PC-3 (cell line): ENCODE measurements at regions of chr3 and their contacts with region 1.

Region 1: DNA sequence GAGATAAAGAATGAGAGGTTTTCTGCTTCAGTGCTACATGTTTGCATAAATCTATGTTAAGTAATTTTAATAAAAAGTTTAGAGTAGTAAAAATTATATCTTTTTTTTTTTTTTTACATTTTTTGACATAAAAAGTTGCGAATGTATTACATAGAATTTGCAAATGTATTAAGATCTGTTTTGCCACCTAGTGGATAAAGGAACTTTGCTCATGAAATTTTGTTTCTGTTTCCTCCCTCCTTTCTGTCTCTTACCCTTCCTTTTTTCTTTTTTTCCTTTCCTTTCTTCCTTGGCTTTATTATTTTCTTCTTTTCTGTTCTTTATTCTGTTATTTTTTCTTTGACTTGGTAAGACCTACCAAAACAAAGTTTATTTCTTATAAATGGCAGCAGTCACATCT is 58.5 kb upstream of the UTS2B start:
- DNase-seq: peak; percentile 42
- ATAC-seq: no peak
- H3K4me3 ChIP-seq: no peak overlapping the region
- H3K27ac ChIP-seq: no peak overlapping the region
- H3K4me1 ChIP-seq: no peaks in the 10 kb centered on the region; the same call in 1 of the 2 replicates
- H3K27me3 ChIP-seq: no peaks in the 10 kb centered on the region
- CTCF ChIP-seq: peak; percentile 45

Region 2: GRCh38 chr3:190617185-190617584 is 771.6 kb before region 1 on chr3:
- CTCF ChIA-PET with region 1: no interaction called
- POLR2A ChIA-PET with region 1: no interaction called
- intact Hi-C with region 1: no loop called
- DNase-seq: peak; percentile 7
- ATAC-seq: no peak
- H3K4me3 ChIP-seq: no peak overlapping the region
- H3K27ac ChIP-seq: no peak overlapping the region
- H3K4me1 ChIP-seq: no peaks in the 10 kb centered on the region
- H3K27me3 ChIP-seq: no peaks in the 10 kb centered on the region
- CTCF ChIP-seq: no peak

Region 3: GRCh38 chr3:191217301-191217700 is 171.5 kb before region 1 on chr3:
- CTCF ChIA-PET with region 1: no interaction called
- POLR2A ChIA-PET with region 1: no interaction called
- intact Hi-C with region 1: no loop called
- DNase-seq: no peak
- ATAC-seq: no peak
- H3K4me3 ChIP-seq: no peak overlapping the region
- H3K27ac ChIP-seq: no peak overlapping the region
- H3K4me1 ChIP-seq: no peaks in the 10 kb centered on the region
- H3K27me3 ChIP-seq: no peaks in the 10 kb centered on the region
- CTCF ChIP-seq: no peak

Region 4: DNA sequence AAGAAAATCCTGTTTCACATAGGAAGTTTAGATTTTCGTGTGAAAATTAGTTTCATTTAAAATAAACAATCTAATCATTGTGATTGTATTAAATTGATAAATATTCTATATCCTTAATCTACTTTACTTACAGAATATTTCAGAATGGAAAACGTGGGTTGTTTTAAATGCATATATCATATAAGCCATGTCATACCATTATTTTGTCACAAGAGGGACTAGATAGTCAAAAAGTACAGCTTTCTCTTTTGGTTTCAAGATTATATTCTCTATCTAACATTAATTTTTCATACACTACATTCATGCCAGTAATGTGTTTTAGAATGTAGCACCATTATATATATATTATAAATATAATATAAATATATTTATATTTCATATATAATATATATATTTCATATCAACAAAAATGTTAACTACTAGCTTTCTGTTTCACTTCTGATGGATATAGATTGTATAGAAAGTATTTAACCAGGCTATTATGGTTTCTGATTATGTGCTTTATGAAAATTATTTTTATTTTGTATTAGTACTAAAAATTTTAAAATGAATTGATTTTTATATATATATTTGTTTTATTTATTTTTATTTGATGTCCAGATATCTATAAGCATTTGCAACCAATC is 144.5 kb before region 1 on chr3:
- CTCF ChIA-PET with region 1: no interaction called
- POLR2A ChIA-PET with region 1: no interaction called
- intact Hi-C with region 1: loop called (anchors 1 kb)
- DNase-seq: peak; percentile 56
- ATAC-seq: peak; percentile 19; the same call in 1 of the 2 replicates
- H3K4me3 ChIP-seq: no peak overlapping the region
- H3K27ac ChIP-seq: no peak overlapping the region
- H3K4me1 ChIP-seq: peaks cover 44% of the 10 kb centered on the region
- H3K27me3 ChIP-seq: no peaks in the 10 kb centered on the region
- CTCF ChIP-seq: peak; percentile 65

Region 5: GRCh38 chr3:191356611-191357439 is 32.0 kb before region 1 on chr3:
- CTCF ChIA-PET with region 1: no interaction called
- POLR2A ChIA-PET with region 1: no interaction called
- intact Hi-C with region 1: loop called (anchors 5 kb)
- DNase-seq: peak; percentile 77
- ATAC-seq: peak; percentile 79
- H3K4me3 ChIP-seq: no peak overlapping the region
- H3K27ac ChIP-seq: peak overlapping the region; percentile 51
- H3K4me1 ChIP-seq: peaks cover 57% of the 10 kb centered on the region
- H3K27me3 ChIP-seq: no peaks in the 10 kb centered on the region
- CTCF ChIP-seq: no peak

Region 6: DNA sequence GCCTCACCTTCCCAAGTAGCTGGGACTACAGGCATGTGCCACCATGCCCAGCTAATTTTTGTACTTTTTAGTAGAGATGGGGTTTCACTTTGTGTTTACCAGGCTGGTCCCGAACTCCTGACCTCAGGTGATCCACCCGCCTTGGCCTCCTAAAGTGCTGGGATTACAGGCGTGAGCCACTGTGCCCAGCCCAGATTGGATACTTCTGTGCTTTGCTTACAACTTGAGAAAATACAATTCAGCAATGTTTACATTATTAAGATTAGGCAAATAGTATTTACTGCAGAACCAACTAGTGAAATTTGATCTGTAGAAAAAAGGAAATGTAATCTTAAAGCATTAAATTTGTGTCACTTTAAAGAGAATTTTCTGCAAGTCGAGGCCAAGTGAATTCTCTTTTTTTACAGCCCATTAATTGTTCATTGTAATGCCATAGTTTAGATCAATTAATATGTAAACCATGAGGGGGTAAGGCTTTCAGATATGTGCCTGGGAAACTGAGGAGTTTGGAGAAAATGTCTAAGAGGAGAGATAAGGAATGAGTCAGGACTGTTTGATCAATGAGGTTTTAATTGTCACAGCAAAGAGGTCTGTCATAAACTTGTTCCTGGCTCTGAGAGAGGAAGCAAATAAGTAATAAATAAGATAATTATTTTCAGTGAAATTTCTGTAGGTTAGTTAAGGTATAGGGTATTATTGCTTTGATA is 87.4 kb after region 1 on chr3:
- CTCF ChIA-PET with region 1: no interaction called
- POLR2A ChIA-PET with region 1: no interaction called
- intact Hi-C with region 1: no loop called
- DNase-seq: peak; percentile 45
- ATAC-seq: peak; percentile 83
- H3K4me3 ChIP-seq: no peak overlapping the region
- H3K27ac ChIP-seq: no peak overlapping the region
- H3K4me1 ChIP-seq: peaks cover 14% of the 10 kb centered on the region; the same call in 1 of the 2 replicates
- H3K27me3 ChIP-seq: no peaks in the 10 kb centered on the region
- CTCF ChIP-seq: no peak

Region 7: DNA sequence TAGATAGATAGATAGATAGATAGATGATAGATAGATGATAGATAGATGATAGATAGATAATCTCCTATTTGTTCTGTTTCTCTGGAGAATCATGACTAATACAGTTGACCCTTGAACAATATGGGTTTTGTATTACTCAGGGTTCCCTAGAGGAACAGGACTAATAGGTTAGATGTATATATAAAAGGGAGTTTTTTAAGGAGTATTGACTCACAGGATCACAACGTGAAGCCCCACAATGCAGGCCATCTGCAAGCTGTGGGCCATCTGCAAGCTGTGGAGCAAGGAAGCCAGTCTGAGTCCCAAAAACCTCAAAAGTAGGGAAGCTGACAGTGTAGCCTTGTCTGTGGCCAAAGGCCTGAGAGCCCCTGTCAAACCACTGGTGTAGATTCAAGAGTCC is 139.8 kb after region 1 on chr3:
- CTCF ChIA-PET with region 1: no interaction called
- POLR2A ChIA-PET with region 1: no interaction called
- intact Hi-C with region 1: no loop called
- DNase-seq: peak; percentile 32
- ATAC-seq: no peak
- H3K4me3 ChIP-seq: no peak overlapping the region
- H3K27ac ChIP-seq: no peak overlapping the region
- H3K4me1 ChIP-seq: no peaks in the 10 kb centered on the region
- H3K27me3 ChIP-seq: 0 out of 2 replicates have a peak, but pooled peaks cover 4% of the 10 kb centered on the region
- CTCF ChIP-seq: no peak